ENCODE measurements at regions of chr19 and their contacts with region 1.

Region 1: GRCh38 chr19:40165362-40165937 is 25.8 kb upstream of the MAP3K10 start:
- DNase-seq: peak; percentile 99
- ATAC-seq: peak; percentile 76
- H3K4me3 ChIP-seq: peak overlapping the region in 1 of 2 experiments; percentile 0; a peak in 1 of 4 replicates
- H3K27ac ChIP-seq: 0 out of 2 replicates have a peak overlapping the region, but pooled peaks have one; percentile 0
- H3K4me1 ChIP-seq: peaks cover 15% of the 10 kb centered on the region
- H3K27me3 ChIP-seq: no peaks in the 10 kb centered on the region
- CTCF ChIP-seq: no peak

Region 2: GRCh38 chr19:38975214-38975860 is 1190.1 kb before region 1 on chr19 and contains the start of gene FBXO17:
- CTCF ChIA-PET with region 1: interaction called, 13 read pairs
- POLR2A ChIA-PET with region 1: no interaction called
- in situ Hi-C with region 1: no loop called
- intact Hi-C with region 1: no loop called
- DNase-seq: peak; percentile 81
- ATAC-seq: peak; percentile 89
- H3K4me3 ChIP-seq: peak within 1 kb of the TSS; percentile 50 to 59
- H3K27ac ChIP-seq: peak within 1 kb of the TSS; percentile 97
- H3K4me1 ChIP-seq: peaks cover 48% of the 10 kb centered on the region
- H3K27me3 ChIP-seq: no peaks in the 10 kb centered on the region
- CTCF ChIP-seq: no peak
- total RNA-seq, gene FBXO17: 411 TPM

Region 3: DNA sequence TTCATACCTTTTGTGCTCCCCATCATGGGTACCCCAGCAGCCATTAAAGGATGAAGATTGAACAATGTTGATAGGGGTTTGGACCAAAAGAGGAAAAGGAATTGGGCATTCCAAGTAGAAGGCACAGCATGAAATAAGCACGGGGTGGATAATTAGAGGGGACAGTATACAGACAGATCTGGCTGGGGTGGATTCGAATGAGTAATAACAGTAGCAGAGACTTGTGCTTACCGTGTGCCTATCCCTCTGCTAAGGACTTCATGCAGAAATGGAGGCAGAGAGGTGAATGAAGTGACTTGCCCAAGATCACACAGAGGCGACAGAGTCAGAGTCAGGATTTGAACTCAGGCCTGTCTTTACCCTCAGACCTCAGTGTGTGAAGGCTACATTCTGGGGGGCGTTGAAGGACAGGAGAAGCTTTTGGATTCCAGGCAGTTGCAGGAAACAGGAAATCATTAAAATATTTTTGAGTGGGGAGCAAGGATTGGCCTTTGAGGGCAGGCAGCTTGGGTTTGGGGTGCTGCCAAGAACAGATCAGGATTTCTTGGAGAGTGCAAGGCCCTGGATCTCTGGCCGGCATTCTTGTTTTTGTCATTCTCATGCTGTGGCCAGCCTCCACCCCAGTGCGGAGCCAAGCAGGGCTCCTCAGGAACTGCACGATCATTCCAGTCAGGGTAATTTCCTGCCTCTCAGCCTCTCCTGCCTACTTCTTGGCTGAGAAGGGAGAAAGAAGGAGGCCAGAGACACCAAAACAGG is 793.2 kb before region 1 on chr19:
- CTCF ChIA-PET with region 1: no interaction called
- POLR2A ChIA-PET with region 1: no interaction called
- in situ Hi-C with region 1: no loop called
- intact Hi-C with region 1: no loop called
- DNase-seq: no peak
- ATAC-seq: peak; percentile 2
- H3K4me3 ChIP-seq: no peak overlapping the region
- H3K27ac ChIP-seq: no peak overlapping the region
- H3K4me1 ChIP-seq: no peaks in the 10 kb centered on the region
- H3K27me3 ChIP-seq: no peaks in the 10 kb centered on the region
- CTCF ChIP-seq: no peak

Region 4: DNA sequence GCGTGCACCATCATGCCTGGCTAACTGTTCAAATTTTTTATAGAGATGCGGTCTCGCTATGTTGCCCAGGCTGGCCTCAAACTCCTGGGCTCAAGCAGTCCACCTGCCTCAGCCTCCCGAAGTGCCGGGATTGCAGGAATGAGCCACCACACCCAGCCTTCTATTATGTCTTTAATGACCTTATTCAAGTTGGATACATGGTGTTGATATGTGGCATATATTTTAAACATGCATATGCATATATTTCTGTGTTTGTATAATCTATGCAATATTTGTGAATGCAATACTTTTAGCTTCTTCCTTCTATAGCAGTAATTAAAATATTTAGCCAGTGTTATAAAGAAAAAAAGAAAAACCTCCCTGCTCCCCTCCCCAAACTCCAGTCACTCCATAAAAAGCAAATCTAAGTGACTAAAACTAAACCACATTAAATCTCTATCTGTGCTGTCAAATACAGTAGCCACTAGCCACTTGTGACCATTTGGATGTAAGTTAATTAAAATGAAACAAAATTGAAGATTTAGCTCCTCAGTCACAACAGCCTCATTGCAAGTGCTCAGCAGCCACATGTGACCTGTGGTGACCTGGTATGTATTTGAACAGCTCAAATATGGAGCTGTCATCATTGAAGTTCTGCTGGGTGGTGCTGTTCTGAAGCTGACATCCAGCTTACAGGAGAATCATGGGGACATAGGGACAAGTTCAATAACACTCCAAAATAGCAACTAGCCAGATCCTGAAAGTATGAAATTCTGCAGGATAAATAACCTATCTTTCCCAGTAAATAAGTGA is 258.4 kb before region 1 on chr19:
- CTCF ChIA-PET with region 1: interaction called, 4 read pairs
- POLR2A ChIA-PET with region 1: interaction called, 13 read pairs
- in situ Hi-C with region 1: no loop called
- intact Hi-C with region 1: no loop called
- DNase-seq: no peak
- ATAC-seq: no peak
- H3K4me3 ChIP-seq: no peak overlapping the region
- H3K27ac ChIP-seq: no peak overlapping the region
- H3K4me1 ChIP-seq: no peaks in the 10 kb centered on the region
- H3K27me3 ChIP-seq: peaks cover 3% of the 10 kb centered on the region; the same call in 1 of the 2 replicates
- CTCF ChIP-seq: no peak

Region 5: GRCh38 chr19:40035996-40036395 is 129.5 kb before region 1 on chr19:
- CTCF ChIA-PET with region 1: interaction called, 12 read pairs
- POLR2A ChIA-PET with region 1: no interaction called
- in situ Hi-C with region 1: no loop called
- intact Hi-C with region 1: no loop called
- DNase-seq: no peak
- ATAC-seq: no peak
- H3K4me3 ChIP-seq: no peak overlapping the region
- H3K27ac ChIP-seq: no peak overlapping the region
- H3K4me1 ChIP-seq: no peaks in the 10 kb centered on the region
- H3K27me3 ChIP-seq: no peaks in the 10 kb centered on the region
- CTCF ChIP-seq: peak; percentile 19; the same call in 1 of the 2 replicates

Region 6: GRCh38 chr19:40139533-40140287 is 25.7 kb before region 1 on chr19:
- CTCF ChIA-PET with region 1: interaction called, 142 read pairs
- POLR2A ChIA-PET with region 1: interaction called, 6 read pairs
- in situ Hi-C with region 1: no loop called
- intact Hi-C with region 1: no loop called
- DNase-seq: peak; percentile 100
- ATAC-seq: peak; percentile 76
- H3K4me3 ChIP-seq: no peak overlapping the region
- H3K27ac ChIP-seq: no peak overlapping the region
- H3K4me1 ChIP-seq: no peaks in the 10 kb centered on the region
- H3K27me3 ChIP-seq: peaks cover 43% of the 10 kb centered on the region
- CTCF ChIP-seq: no peak

Region 7: GRCh38 chr19:40200341-40201099 is 35.1 kb after region 1 on chr19:
- CTCF ChIA-PET with region 1: interaction called, 17 read pairs
- POLR2A ChIA-PET with region 1: interaction called, 3 read pairs
- in situ Hi-C with region 1: no loop called
- intact Hi-C with region 1: no loop called
- DNase-seq: no peak
- ATAC-seq: peak; percentile 7; the same call in 1 of the 2 replicates
- H3K4me3 ChIP-seq: no peak overlapping the region
- H3K27ac ChIP-seq: no peak overlapping the region
- H3K4me1 ChIP-seq: no peaks in the 10 kb centered on the region
- H3K27me3 ChIP-seq: no peaks in the 10 kb centered on the region
- CTCF ChIP-seq: no peak

Region 8: GRCh38 chr19:40279120-40279551 is 113.7 kb after region 1 on chr19:
- CTCF ChIA-PET with region 1: interaction called, 4 read pairs
- POLR2A ChIA-PET with region 1: interaction called, 18 read pairs
- in situ Hi-C with region 1: no loop called
- intact Hi-C with region 1: no loop called
- DNase-seq: no peak
- ATAC-seq: no peak
- H3K4me3 ChIP-seq: no peak overlapping the region
- H3K27ac ChIP-seq: no peak overlapping the region
- H3K4me1 ChIP-seq: peaks cover 67% of the 10 kb centered on the region
- H3K27me3 ChIP-seq: no peaks in the 10 kb centered on the region
- CTCF ChIP-seq: no peak